ENCODE measurements at regions of chr7 and their contacts with region 1.

Region 1: GRCh38 chr7:13524076-13524475 is 465.4 kb downstream of the ETV1 start:
- DNase-seq: no peak
- H3K4me3 ChIP-seq: no peak overlapping the region
- H3K27ac ChIP-seq: no peak overlapping the region
- H3K4me1 ChIP-seq: no peaks in the 10 kb centered on the region
- H3K27me3 ChIP-seq: no peaks in the 10 kb centered on the region
- CTCF ChIP-seq: no peak

Region 2: DNA sequence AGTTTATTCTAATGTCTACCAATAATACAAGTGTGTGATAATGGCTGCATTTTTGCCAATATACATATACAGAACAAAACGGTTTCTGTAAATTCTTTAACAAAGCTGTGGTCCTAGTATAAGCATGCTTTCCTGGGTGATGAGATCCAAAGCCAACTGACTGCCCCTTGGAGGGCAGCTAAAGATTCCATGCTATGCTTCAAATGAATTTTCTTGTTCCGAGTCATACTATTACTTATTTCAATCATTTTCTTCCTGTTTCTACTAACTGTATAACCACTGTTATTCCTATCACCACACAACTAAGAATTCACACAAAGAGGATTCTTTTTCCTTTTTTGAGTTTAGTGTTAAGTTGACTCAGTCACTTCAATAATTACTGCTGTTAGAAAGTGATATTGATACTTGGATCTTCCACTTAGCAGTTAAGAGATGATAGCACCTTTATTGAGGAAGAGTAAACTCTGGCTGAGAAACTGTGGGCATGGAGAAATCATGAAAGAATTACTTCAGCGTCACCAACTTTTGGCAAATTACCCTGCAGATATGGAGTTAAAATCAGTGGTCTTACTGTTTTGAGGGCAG is 639.1 kb before region 1 on chr7:
- CTCF ChIA-PET with region 1: no interaction called
- dilution Hi-C with region 1: no loop called
- in situ Hi-C with region 1: no loop called
- intact Hi-C with region 1: no loop called
- DNase-seq: no peak
- H3K4me3 ChIP-seq: no peak overlapping the region
- H3K27ac ChIP-seq: no peak overlapping the region
- H3K4me1 ChIP-seq: peaks cover 5% of the 10 kb centered on the region
- H3K27me3 ChIP-seq: no peaks in the 10 kb centered on the region
- CTCF ChIP-seq: no peak

Region 3: DNA sequence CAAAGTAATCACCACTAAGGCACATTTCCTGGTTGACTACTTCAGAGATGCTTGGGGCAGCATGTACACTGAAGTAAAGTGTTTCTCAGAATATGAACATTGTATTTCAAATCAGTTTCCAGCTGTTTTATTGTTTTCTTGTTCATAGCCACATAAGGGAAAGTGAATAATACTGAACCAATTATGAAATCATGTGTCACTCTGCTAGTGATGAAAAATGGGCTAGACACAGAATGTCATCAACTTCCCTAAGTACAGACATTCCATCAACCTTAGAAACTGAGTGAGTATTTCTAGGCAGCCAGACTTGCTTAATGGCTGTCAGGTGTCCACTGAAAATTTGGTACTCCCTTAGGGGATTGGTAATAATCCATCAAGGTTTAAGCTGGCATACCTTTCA is 233.1 kb before region 1 on chr7:
- CTCF ChIA-PET with region 1: no interaction called
- dilution Hi-C with region 1: no loop called
- in situ Hi-C with region 1: no loop called
- intact Hi-C with region 1: no loop called
- DNase-seq: no peak
- H3K4me3 ChIP-seq: no peak overlapping the region
- H3K27ac ChIP-seq: no peak overlapping the region
- H3K4me1 ChIP-seq: no peaks in the 10 kb centered on the region
- H3K27me3 ChIP-seq: no peaks in the 10 kb centered on the region
- CTCF ChIP-seq: no peak

Region 4: GRCh38 chr7:13551503-13551902 is 27.4 kb after region 1 on chr7:
- CTCF ChIA-PET with region 1: no interaction called
- dilution Hi-C with region 1: no loop called
- in situ Hi-C with region 1: no loop called
- intact Hi-C with region 1: no loop called
- DNase-seq: no peak
- H3K4me3 ChIP-seq: no peak overlapping the region
- H3K27ac ChIP-seq: no peak overlapping the region
- H3K4me1 ChIP-seq: no peaks in the 10 kb centered on the region
- H3K27me3 ChIP-seq: no peaks in the 10 kb centered on the region
- CTCF ChIP-seq: no peak

Region 5: GRCh38 chr7:13742811-13743210 is 218.7 kb after region 1 on chr7:
- CTCF ChIA-PET with region 1: no interaction called
- dilution Hi-C with region 1: no loop called
- in situ Hi-C with region 1: no loop called
- intact Hi-C with region 1: loop called (anchors 1 kb)
- DNase-seq: peak; percentile 33
- H3K4me3 ChIP-seq: no peak overlapping the region
- H3K27ac ChIP-seq: no peak overlapping the region
- H3K4me1 ChIP-seq: peaks cover 6% of the 10 kb centered on the region
- H3K27me3 ChIP-seq: no peaks in the 10 kb centered on the region
- CTCF ChIP-seq: peak; percentile 39 to 64

Region 6: DNA sequence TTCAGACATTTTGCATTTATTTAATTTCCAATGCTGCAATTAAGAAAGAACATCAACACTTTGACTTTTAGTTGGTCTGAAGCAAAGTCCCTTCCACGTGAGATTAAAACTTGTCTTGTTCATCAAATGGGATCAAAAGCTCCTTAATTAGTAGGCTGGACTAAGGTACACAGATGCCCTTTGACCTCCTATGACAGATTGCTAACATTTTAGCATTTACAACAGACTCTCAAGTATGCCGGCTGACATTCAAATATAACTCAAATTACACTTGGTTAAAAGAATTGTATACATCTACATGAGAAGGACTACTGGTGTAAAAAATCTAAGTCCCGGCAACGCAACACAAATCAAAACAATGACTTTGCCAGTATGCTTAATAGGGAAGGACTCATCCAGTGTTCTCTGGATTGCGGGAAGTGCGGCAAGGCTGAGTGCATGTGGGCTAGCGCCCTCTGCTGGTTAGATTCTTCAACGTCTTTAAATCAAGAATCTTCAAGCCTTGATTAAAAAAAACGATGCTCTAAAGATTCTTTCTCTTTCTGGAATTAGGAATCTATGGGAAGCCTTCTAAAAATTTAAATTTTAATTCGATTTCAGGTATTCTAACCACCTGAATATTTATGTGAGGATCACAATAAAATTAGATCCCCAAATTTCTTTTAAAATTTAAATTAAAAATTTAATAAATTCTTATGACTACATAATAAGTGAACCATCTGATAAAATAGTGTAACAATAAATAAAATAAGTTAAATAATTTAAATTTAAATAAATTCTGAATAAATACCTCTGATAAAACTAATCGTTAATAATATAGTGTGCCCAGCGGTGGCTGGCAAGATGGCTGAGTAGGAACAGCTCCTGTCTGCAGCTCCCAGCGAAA is 933.7 kb after region 1 on chr7:
- CTCF ChIA-PET with region 1: no interaction called
- dilution Hi-C with region 1: no loop called
- in situ Hi-C with region 1: no loop called
- intact Hi-C with region 1: loop called (anchors 1 kb)
- DNase-seq: peak; percentile 60
- H3K4me3 ChIP-seq: no peak overlapping the region
- H3K27ac ChIP-seq: no peak overlapping the region
- H3K4me1 ChIP-seq: no peaks in the 10 kb centered on the region
- H3K27me3 ChIP-seq: no peaks in the 10 kb centered on the region
- CTCF ChIP-seq: peak; percentile 71 to 90

Measured in mammary epithelial cell (primary cell).